WTC11 (cell line): ENCODE measurements at regions of chr1 and their contacts with region 1.

Region 1: DNA sequence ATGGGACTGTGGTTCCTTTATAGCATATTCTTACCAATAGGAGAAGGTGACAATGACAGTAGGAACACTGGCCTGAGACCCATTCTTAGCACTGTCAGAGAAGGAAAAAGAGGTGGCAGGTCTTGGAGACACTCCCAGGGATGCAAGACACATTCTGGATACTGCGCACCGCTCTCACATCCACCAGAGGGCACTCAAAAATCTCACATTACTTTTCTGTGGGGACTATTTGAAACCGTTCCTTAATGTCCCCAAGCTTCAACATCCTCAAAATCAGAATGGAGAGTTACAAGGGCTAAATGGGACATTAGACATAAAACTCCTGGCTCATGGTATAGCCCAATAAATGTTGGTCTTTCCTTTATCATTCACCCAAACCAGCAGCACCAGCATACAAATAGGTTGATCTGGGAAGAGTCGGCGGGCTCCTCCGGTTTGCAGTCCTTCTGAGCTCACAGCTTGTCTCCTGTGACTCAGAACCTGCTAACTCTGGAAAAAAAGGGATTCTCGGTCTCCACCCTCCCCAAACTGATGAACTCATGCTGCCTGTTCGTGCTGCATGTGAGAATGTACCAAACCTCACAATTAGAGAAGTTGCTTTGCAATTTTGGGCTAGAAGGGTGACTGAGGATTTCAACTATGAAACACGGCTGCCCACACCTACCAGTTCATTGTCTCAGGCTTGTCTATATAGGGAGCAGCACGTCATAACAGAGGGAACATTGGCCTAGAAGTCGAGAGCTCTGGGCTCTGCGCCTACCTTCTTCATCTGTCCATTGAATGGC is 40.2 kb downstream of the IL12RB2 start:
- DNase-seq: peak; percentile 49
- ATAC-seq: peak; percentile 95
- H3K4me3 Mint-ChIP-seq: no peak overlapping the region
- H3K27ac Mint-ChIP-seq: no peak overlapping the region
- H3K4me1 Mint-ChIP-seq: peaks cover 26% of the 10 kb centered on the region
- H3K27me3 Mint-ChIP-seq: peaks cover 6% of the 10 kb centered on the region; the same call in 1 of the 2 replicates
- CTCF ChIP-seq: peak; percentile 33

Region 2: GRCh38 chr1:67314696-67315095 is 33.2 kb before region 1 on chr1:
- CTCF ChIA-PET with region 1: interaction called, 10 read pairs
- POLR2A ChIA-PET with region 1: no interaction called
- DNase-seq: no peak
- ATAC-seq: peak; percentile 47; the same call in 1 of the 2 replicates
- H3K4me3 Mint-ChIP-seq: no peak overlapping the region
- H3K27ac Mint-ChIP-seq: no peak overlapping the region
- H3K4me1 Mint-ChIP-seq: peaks cover 16% of the 10 kb centered on the region
- H3K27me3 Mint-ChIP-seq: peaks cover 6% of the 10 kb centered on the region
- CTCF ChIP-seq: no peak

Region 3: DNA sequence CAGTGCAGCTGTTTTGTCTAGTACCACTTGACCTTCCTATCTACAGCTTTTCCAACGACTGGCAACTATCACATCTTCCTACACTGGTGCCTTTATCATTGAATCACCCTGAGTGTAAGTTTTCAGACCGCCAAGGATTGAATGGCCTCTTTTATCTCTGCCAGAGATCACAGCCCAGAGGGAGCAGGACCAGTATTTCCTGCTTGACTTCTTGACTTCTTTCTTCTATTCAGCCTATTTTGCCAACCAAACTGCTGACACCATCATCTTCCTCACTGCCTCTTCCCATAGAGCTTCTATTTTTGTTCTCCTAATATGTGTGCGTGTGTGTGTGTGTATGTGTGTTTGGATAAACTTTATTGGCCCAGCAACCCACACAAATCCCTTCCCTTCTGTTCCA is 28.5 kb after region 1 on chr1:
- CTCF ChIA-PET with region 1: no interaction called
- POLR2A ChIA-PET with region 1: no interaction called
- DNase-seq: no peak
- ATAC-seq: peak; percentile 38; the same call in 1 of the 2 replicates
- H3K4me3 Mint-ChIP-seq: no peak overlapping the region
- H3K27ac Mint-ChIP-seq: no peak overlapping the region
- H3K4me1 Mint-ChIP-seq: peaks cover 30% of the 10 kb centered on the region
- H3K27me3 Mint-ChIP-seq: no peaks in the 10 kb centered on the region
- CTCF ChIP-seq: no peak

Region 4: DNA sequence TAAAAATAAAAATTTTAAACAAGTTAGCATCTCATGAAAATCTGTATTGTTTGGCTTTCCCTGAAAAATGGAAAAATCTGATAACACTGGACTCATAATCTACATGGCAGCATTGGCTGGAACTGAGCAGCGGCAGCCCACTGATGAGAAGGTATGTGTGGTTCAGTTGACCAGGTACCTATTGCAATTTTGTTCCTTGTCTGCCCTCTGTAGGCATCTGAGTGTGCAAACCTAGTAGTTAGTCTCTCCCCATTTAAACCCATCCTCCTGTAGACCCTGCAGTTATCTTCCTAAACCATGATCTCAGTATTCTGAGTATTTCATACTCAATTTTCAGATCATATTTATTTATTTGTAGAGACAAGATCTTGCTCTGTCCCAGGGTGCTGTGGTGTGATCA is 141.8 kb after region 1 on chr1:
- CTCF ChIA-PET with region 1: interaction called, 12 read pairs
- POLR2A ChIA-PET with region 1: no interaction called
- DNase-seq: no peak
- ATAC-seq: peak; percentile 93
- H3K4me3 Mint-ChIP-seq: no peak overlapping the region
- H3K27ac Mint-ChIP-seq: no peak overlapping the region
- H3K4me1 Mint-ChIP-seq: peaks cover 13% of the 10 kb centered on the region
- H3K27me3 Mint-ChIP-seq: no peaks in the 10 kb centered on the region; the same call in 1 of the 2 replicates
- CTCF ChIP-seq: 0 out of 2 replicates have a peak, but pooled peaks have one; percentile 16